H1 (cell line): ENCODE measurements at regions of chr22 and their contacts with region 1.

Region 1: DNA sequence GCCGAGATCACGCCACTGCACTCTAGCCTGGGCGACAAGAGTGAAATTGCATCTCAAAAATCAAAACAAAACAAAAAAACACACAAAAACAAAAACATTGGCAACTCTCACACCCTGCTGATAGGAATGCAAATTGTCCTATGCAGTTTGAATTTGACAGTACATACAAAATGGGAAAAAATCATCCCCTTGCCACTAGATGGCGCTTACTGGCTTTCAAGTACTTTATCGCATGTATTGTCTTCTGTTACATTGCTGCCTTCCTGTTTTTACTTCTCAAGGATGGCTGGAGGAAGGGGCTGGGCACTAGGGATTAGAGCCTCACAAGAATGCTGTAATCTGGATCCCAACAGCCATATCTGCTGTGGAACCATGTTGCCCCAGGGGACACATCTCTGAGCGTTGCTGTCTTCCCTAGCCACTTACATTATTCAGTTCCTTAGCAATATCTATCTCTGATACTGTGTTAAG is 59.4 kb upstream of the A4GALT start:
- DNase-seq: peak in 1 of 2 experiments; percentile 39
- H3K4me3 ChIP-seq: no peak overlapping the region
- H3K27ac ChIP-seq: no peak overlapping the region
- H3K4me1 ChIP-seq: no peaks in the 10 kb centered on the region
- H3K27me3 ChIP-seq: no peaks in the 10 kb centered on the region
- CTCF ChIP-seq: peak in 2 of 3 experiments; percentile 76 to 92; a peak in 3 of 4 replicates
- EP300 ChIP-seq: no peak
- POLR2A ChIP-seq: no peak
- RAD21 ChIP-seq: peak; percentile 77 to 80

Region 2: DNA sequence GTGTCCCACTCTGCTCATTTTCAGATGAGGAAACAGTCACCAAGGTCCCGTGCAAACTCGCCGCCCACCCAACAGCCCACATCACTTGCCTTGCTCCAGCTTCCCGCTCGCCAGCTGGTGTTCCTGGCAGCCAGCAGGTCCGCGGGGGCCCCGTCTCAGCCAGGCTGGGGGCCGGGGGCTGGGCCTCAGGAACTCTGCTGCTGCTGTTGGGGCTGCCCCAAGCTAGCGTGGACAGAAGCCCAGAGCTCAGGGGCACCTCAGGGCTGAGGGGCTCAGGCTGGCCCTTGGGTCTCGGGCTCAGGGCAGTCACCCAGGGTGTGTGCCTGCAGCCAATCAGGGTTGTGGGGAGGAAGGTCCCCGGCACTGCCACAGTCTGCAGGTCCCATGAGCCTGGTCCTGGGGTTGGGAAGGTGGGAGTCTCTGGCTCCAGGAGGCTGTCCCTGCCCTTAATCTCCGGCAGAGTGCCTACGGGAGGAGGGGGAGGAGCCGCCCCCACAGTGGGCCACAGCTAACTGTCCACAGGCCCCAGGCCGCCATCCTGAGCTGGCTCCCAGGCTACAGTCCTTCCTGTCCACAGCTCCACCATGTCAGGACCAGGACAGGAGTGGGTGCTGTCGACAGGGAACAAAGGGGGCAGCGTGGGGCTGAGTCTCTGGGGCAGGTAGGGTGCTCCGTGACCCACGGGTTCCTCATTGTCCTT is 11.8 kb after region 1 on chr22:
- CTCF ChIA-PET with region 1: interaction called, 12 read pairs
- POLR2A ChIA-PET with region 1: no interaction called
- DNase-seq: no peak
- H3K4me3 ChIP-seq: no peak overlapping the region
- H3K27ac ChIP-seq: no peak overlapping the region
- H3K4me1 ChIP-seq: no peaks in the 10 kb centered on the region; a peak in 2 of 7 replicates
- H3K27me3 ChIP-seq: no peaks in the 10 kb centered on the region; a peak in 1 of 7 replicates
- CTCF ChIP-seq: no peak
- EP300 ChIP-seq: no peak
- POLR2A ChIP-seq: no peak
- RAD21 ChIP-seq: no peak

Region 3: GRCh38 chr22:43230971-43231723 is 451.0 kb after region 1 on chr22:
- CTCF ChIA-PET with region 1: no interaction called
- POLR2A ChIA-PET with region 1: no interaction called
- DNase-seq: peak; percentile 66 to 92
- H3K4me3 ChIP-seq: peak overlapping the region in 3 of 4 experiments; percentile 40 to 54 (median 52); a peak in 6 of 8 replicates
- H3K27ac ChIP-seq: no peak overlapping the region
- H3K4me1 ChIP-seq: peaks cover 0 to 19% (median 13%) of the 10 kb centered on the region in 4 experiments; a peak in 6 of 7 replicates
- H3K27me3 ChIP-seq: no peaks in the 10 kb centered on the region
- CTCF ChIP-seq: peak; percentile 88 to 94 (median 89)
- EP300 ChIP-seq: no peak
- POLR2A ChIP-seq: no peak
- RAD21 ChIP-seq: peak; percentile 84 to 88